Activated T-helper 1 cell treated with anti-CD3 and anti-CD28 coated beads, Interleukin-12 subunit alpha, Interleukin-12 subunit beta, Interleukin-2, Interleukin-4 antibody, amounts not matched to agents 30 ng/mL and 10 ng/mL and 1 ng/mL, durations not matched to agents 14 hours and 24 hours and 36 hours (primary cell): ENCODE measurements at regions of chr3 and their contacts with region 1.

Region 1: DNA sequence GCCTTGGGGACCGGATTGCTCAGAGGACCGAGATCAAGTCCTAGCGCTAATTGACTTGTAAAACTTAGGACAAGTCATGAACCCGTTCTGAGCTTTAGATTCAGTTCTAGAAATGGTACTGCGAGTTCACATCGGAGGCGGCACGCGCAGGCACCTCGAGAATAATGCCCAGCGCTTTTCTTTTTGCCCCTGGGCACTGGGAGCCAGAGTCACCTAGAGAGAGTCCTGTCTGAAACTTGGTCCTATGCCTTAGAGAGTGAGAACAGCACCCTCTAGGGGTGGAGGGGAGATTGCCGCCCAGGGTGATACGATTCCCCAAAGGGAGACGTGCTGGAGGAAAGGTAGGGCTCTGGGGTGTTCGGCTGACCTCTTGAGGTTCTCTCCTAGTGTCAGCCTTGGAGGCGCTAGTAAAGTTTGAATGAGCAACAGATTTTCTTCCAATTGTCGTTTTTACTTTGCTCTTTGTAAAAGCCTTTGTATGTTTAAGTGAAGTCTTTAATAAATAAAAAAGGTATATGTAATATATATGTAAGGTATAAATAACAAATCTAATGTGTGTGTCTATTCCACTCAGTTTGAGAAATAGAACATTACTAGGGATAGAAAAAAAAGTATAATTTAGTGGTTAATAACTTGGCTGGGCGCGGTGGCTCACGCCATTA is 826 bp downstream of the EEF1AKMT4 start:
- DNase-seq: peak; percentile 85
- H3K4me3 Mint-ChIP-seq: peak overlapping the region; percentile 93
- H3K27ac Mint-ChIP-seq: peak overlapping the region; percentile 97
- H3K4me1 Mint-ChIP-seq: peaks cover 24% of the 10 kb centered on the region
- H3K27me3 Mint-ChIP-seq: no peaks in the 10 kb centered on the region

Region 2: GRCh38 chr3:183895296-183895695 is 355.0 kb before region 1 on chr3:
- intact Hi-C with region 1: loop called (anchors 1 kb)
- DNase-seq: no peak
- H3K4me3 Mint-ChIP-seq: no peak overlapping the region
- H3K27ac Mint-ChIP-seq: no peak overlapping the region
- H3K4me1 Mint-ChIP-seq: peaks cover 6% of the 10 kb centered on the region
- H3K27me3 Mint-ChIP-seq: peaks cover 8% of the 10 kb centered on the region

Region 3: GRCh38 chr3:184129012-184129411 is 121.3 kb before region 1 on chr3:
- intact Hi-C with region 1: no loop called
- DNase-seq: no peak
- H3K4me3 Mint-ChIP-seq: no peak overlapping the region
- H3K27ac Mint-ChIP-seq: no peak overlapping the region
- H3K4me1 Mint-ChIP-seq: peaks cover 8% of the 10 kb centered on the region
- H3K27me3 Mint-ChIP-seq: peaks cover 3% of the 10 kb centered on the region

Region 4: DNA sequence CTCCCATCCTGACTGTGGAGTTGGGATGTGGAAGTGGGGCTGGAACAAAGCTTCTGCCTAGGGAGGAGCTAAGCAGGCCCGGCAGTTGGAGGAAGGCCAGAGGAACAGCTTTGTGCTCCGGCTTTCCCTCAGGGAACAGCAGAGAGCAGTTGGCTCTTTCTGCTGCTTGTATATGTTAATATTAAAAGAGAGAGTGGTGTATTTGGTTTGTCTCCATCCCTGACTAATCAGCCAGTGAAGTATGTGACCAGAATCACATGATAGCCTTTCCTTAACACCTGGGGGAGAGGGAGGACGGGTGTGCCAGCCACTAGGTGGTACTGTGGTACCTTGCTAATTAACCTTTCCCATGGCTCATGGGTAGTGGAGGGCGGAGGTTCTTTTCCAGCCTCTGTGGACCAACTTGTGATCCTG is 105.2 kb before region 1 on chr3:
- intact Hi-C with region 1: loop called (anchors 2 kb)
- DNase-seq: no peak
- H3K4me3 Mint-ChIP-seq: no peak overlapping the region
- H3K27ac Mint-ChIP-seq: no peak overlapping the region
- H3K4me1 Mint-ChIP-seq: no peaks in the 10 kb centered on the region
- H3K27me3 Mint-ChIP-seq: no peaks in the 10 kb centered on the region

Region 5: DNA sequence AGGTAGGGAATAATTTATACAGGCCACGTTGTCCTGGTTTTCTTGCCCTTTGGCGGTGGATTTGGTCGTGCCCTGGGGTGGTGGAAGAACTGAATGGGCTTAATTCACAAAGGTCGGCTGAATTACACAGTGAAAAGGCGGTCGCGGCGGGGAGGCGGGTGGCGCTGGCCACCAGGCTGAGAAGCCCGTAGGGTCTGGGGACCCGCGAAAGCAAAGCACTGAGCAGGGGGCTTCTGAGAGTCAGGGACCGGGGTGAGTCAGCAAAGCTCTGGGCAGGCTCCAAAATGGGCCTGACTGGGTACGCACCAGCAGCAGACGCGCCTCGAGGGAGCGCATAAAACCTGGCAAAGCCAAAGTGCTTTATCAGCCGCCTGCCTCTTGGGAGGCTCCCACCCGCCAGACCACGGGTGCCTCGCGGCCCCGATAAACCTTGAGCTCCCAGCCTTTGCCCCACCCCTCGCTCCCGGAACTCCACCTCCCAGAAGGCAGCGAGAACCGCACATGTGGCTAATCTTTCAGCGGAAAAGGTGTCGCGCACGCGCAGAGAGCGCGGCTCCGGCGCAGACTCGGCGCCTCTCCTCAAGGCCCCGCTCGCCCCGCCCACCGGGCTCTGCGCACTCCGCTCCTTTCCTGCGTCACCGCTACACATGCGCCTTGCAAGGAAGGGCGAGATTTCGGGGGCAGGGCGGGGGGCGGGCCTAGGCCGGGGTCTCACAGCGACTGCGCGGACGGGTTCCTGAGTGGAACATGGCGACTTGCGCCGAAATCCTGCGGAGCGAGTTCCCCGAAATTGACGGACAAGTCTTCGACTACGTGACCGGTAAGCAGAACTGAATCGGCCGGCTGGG is 64.6 kb before region 1 on chr3 and contains the start of gene ABCF3:
- intact Hi-C with region 1: loop called (anchors 1 kb)
- DNase-seq: peak; percentile 99
- H3K4me3 Mint-ChIP-seq: peak within 1 kb of the TSS; percentile 98
- H3K27ac Mint-ChIP-seq: peak within 1 kb of the TSS; percentile 89
- H3K4me1 Mint-ChIP-seq: peaks cover 25% of the 10 kb centered on the region
- H3K27me3 Mint-ChIP-seq: no peaks in the 10 kb centered on the region
- total RNA-seq, gene ABCF3: 75.2 and 76.4 TPM in 2 replicates

Region 6: DNA sequence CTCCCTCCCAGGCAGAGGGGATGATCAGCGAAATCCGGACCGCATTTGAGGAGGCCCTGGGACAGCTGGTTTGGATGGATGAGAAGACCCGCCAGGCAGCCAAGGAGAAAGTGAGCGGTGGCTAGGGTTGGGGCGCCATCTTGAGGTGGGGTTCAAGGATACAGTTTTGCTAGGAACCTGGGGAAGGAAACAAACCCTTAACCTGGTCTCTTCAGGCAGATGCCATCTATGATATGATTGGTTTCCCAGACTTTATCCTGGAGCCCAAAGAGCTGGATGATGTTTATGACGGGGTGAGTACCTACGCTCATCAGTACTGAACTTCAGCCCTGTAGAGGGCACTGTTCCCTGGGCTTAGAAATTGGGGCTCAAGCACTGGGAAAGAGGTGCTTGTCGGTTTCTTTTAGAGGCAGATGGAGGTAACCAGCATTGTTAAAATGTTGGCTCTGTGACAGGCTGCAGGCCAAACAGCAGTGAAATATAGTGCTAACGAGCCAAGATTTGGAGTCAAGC is 39.2 kb after region 1 on chr3:
- intact Hi-C with region 1: loop called (anchors 1 kb)
- DNase-seq: peak; percentile 46
- H3K4me3 Mint-ChIP-seq: no peak overlapping the region
- H3K27ac Mint-ChIP-seq: no peak overlapping the region
- H3K4me1 Mint-ChIP-seq: peaks cover 7% of the 10 kb centered on the region
- H3K27me3 Mint-ChIP-seq: peaks cover 10% of the 10 kb centered on the region

Region 7: DNA sequence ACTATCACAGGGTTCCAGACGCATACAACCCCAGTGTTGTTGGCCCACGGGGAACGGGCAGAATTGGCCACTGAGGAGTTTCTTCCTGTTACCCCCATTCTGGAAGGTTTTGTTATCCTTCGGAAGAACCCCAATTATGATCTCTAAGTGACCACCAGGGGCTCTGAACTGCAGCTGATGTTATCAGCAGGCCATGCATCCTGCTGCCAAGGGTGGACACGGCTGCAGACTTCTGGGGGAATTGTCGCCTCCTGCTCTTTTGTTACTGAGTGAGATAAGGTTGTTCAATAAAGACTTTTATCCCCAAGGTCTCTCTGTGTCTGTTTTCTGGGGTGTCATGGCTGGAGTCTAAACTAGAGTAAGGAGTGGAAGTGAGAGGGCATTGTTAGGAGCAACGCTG is 58.4 kb after region 1 on chr3:
- intact Hi-C with region 1: no loop called
- DNase-seq: no peak
- H3K4me3 Mint-ChIP-seq: no peak overlapping the region
- H3K27ac Mint-ChIP-seq: no peak overlapping the region
- H3K4me1 Mint-ChIP-seq: peaks cover 14% of the 10 kb centered on the region
- H3K27me3 Mint-ChIP-seq: no peaks in the 10 kb centered on the region

Region 8: DNA sequence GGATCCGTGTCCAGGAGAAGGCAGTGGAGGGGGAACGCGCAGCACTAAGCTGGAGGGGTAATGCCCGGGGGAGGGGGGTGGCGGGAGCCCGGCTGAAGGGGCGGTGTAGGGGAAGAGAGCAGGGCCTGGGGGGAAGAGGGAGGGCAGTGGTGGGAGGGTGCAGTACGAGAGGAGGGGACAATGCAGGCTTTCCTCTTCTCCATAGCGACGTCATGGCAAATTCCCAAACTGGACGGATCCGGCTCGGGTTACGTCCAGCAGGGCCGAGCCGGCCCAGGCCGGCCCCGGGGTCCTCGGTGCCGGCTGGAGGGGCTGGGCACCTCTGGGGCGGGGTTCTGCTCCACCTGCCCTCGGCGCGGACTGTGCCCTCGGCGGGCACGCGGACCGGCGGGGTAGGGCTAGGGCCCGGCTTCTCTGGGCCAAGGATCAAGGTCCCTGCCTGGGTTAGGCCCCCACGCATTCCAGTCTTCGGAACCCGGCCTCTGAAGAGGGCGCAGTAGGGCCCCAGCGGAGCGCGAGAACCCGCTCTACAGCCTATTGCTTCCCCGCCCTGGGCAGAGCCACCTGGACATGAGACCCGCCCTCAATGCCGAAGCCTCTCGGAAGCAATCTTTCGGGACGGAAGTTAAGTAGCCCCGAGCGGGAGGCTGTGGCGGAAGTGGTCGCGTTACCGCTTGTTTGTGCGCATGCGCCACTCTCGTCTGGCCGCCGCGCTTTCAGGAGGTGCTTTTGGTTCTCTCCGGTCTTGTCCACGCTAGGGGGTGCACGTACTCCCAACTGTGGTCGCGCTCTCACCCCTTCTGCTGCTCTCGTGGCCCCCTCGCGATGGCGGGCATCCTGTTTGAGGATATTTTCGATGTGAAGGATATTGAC is 112.6 kb after region 1 on chr3:
- intact Hi-C with region 1: loop called (anchors 1 kb)
- DNase-seq: peak; percentile 96
- H3K4me3 Mint-ChIP-seq: peak overlapping the region; percentile 100
- H3K27ac Mint-ChIP-seq: peak overlapping the region; percentile 99
- H3K4me1 Mint-ChIP-seq: peaks cover 21% of the 10 kb centered on the region
- H3K27me3 Mint-ChIP-seq: peaks cover 10% of the 10 kb centered on the region

Region 9: DNA sequence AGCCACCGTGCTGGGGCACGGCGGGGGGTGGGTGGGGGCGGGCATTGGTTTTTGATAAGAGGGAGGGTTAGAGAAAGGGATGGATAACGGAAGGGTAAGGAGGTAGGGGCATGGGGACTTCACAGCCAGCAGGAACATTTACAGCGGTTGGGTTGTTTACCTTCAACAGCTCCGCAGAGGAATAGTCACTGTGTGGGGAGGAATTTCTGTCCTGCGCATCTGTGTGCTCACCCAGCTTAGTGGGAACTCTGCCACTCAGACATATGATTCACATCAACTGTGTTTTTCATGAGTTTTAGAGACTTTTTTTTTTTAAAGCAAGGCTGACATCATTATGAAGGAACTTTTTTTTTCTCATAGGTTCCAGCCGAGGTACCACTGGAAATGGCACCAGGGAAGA is 149.1 kb after region 1 on chr3:
- intact Hi-C with region 1: no loop called
- DNase-seq: no peak
- H3K4me3 Mint-ChIP-seq: no peak overlapping the region
- H3K27ac Mint-ChIP-seq: no peak overlapping the region
- H3K4me1 Mint-ChIP-seq: no peaks in the 10 kb centered on the region
- H3K27me3 Mint-ChIP-seq: peaks cover 17% of the 10 kb centered on the region